CD4-positive, alpha-beta memory T cell (primary cell): ENCODE measurements at regions of chr17 and their contacts with region 1.

Region 1: GRCh38 chr17:21252796-21253645 is at the start of gene NATD1:
- DNase-seq: peak; percentile 74 to 86 (median 80)
- H3K4me3 ChIP-seq: peak within 1 kb of the TSS; percentile 38 to 71
- H3K4me3 Mint-ChIP-seq: peak within 1 kb of the TSS; percentile 88 to 95 (median 90)
- H3K27ac ChIP-seq: peak within 1 kb of the TSS; percentile 62
- H3K27ac Mint-ChIP-seq: peak within 1 kb of the TSS; percentile 90 to 95 (median 91)
- H3K4me1 ChIP-seq: peaks cover 27% of the 10 kb centered on the region
- H3K4me1 Mint-ChIP-seq: peaks cover 24 to 59% (median 34%) of the 10 kb centered on the region in 4 donors
- H3K27me3 ChIP-seq: no peaks in the 10 kb centered on the region
- H3K27me3 Mint-ChIP-seq: no peaks in the 10 kb centered on the region
- total RNA-seq, gene NATD1: 13.1 to 13.5 TPM

Region 2: DNA sequence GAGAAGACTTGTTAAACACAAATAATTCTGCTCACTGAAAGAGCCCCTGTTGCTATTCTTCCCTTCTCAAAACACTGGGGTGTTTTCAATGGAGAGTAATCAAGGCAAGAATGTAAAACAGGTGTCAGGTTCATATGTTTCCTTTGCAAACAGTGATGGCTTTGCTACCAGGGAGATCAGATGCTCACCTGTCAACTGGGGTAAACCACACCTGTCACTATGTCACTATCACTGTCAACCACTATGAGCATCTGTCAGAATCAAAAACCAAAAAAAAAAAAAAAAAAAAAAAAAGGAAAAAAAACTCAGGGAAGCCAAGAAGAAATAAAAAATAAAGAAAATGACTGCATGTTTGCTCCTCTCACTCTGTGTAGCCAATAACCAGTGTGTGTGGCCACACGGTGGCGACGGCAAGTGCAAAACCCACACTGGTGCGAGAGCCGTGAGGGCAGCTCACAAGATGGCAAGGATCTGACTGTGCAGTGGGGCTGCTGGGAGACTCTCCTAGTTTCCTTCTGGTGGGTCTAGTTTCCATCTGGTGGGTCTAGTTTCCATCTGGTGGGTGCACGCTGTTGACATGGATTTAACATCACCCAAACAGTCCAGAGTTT is 232.9 kb before region 1 on chr17:
- CTCF ChIA-PET with region 1: no interaction called
- POLR2A ChIA-PET with region 1: no interaction called
- intact Hi-C with region 1: no loop called
- DNase-seq: peak; percentile 27 to 62 (median 33)
- H3K4me3 ChIP-seq: no peak overlapping the region
- H3K4me3 Mint-ChIP-seq: no peak overlapping the region
- H3K27ac ChIP-seq: no peak overlapping the region
- H3K27ac Mint-ChIP-seq: peak overlapping the region in 4 of 7 donors; percentile 23 to 79 (median 64)
- H3K4me1 ChIP-seq: peaks cover 24% of the 10 kb centered on the region
- H3K4me1 Mint-ChIP-seq: peaks cover 22 to 46% (median 29%) of the 10 kb centered on the region in 4 donors
- H3K27me3 ChIP-seq: no peaks in the 10 kb centered on the region
- H3K27me3 Mint-ChIP-seq: no peaks in the 10 kb centered on the region

Region 3: GRCh38 chr17:21268596-21269188 is 15.7 kb after region 1 on chr17:
- CTCF ChIA-PET with region 1: no interaction called
- POLR2A ChIA-PET with region 1: interaction called, 48 read pairs
- intact Hi-C with region 1: no loop called
- DNase-seq: no peak
- H3K4me3 ChIP-seq: peak overlapping the region in 1 of 2 donors; percentile 18
- H3K4me3 Mint-ChIP-seq: peak overlapping the region in 7 of 8 donors; percentile 28 to 70 (median 39)
- H3K27ac ChIP-seq: peak overlapping the region; percentile 53
- H3K27ac Mint-ChIP-seq: peak overlapping the region; percentile 73 to 89 (median 88)
- H3K4me1 ChIP-seq: peaks cover 24% of the 10 kb centered on the region
- H3K4me1 Mint-ChIP-seq: peaks cover 15 to 37% (median 22%) of the 10 kb centered on the region in 4 donors
- H3K27me3 ChIP-seq: no peaks in the 10 kb centered on the region
- H3K27me3 Mint-ChIP-seq: peaks cover 0 to 3% of the 10 kb centered on the region in 2 donors